ENCODE measurements at regions of chr1 and their contacts with region 1.

Region 1: GRCh38 chr1:110495926-110496600 is 22.9 kb downstream of the KCNA10 start:
- DNase-seq: peak; percentile 89
- H3K4me3 Mint-ChIP-seq: no peak overlapping the region
- H3K27ac Mint-ChIP-seq: no peak overlapping the region
- H3K4me1 Mint-ChIP-seq: peaks cover 7% of the 10 kb centered on the region
- H3K27me3 Mint-ChIP-seq: peaks cover 10% of the 10 kb centered on the region

Region 2: GRCh38 chr1:110196917-110197765 is 298.9 kb before region 1 on chr1:
- CTCF ChIA-PET with region 1: interaction called, 60 read pairs
- DNase-seq: peak; percentile 66
- H3K4me3 Mint-ChIP-seq: no peak overlapping the region
- H3K27ac Mint-ChIP-seq: no peak overlapping the region
- H3K4me1 Mint-ChIP-seq: no peaks in the 10 kb centered on the region
- H3K27me3 Mint-ChIP-seq: no peaks in the 10 kb centered on the region

Region 3: GRCh38 chr1:110209715-110210603 is 286.1 kb before region 1 on chr1 and contains the start of gene KCNC4:
- CTCF ChIA-PET with region 1: interaction called, 60 read pairs
- DNase-seq: peak; percentile 95
- H3K4me3 Mint-ChIP-seq: peak within 1 kb of the TSS; percentile 86
- H3K27ac Mint-ChIP-seq: peak within 1 kb of the TSS; percentile 95
- H3K4me1 Mint-ChIP-seq: peaks cover 42% of the 10 kb centered on the region
- H3K27me3 Mint-ChIP-seq: peaks cover 31% of the 10 kb centered on the region

Region 4: DNA sequence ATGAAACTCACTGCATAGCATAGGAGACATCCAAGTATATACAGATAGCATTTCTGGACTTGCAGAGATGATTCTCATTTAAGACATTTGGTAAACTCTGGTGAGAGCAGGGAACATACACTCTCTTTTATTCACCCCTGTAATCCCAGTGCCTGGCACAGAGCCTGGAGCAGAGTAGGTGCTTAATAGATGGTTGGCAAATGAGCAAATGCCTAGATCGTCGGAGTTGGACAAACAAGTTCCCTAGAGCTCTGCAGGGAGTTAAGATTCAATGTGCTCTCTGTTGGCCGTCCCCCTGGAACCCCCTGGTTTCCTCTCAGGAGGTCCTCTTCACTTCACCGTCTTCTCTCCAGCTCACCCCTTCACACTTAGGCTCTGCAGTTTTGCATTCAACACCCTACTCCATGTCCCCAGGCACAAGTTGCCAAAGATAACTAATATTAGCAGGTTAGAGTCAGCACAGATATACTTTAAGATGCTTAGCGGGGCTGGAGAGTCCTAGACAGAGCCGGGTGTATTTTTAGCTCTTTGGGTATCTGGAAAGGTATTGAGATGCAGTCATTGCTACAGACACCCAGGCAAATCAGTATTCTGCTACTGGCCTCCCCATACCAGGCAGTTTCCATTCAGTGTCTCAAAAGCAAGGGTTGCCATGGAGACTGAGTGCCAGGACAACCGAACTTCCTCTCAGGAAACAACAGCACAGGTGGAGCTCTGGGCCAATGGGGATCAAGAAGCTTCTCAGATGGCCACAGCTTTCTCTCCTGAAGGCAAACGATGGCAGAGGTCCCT is 240.9 kb before region 1 on chr1:
- CTCF ChIA-PET with region 1: no interaction called
- DNase-seq: no peak
- H3K4me3 Mint-ChIP-seq: no peak overlapping the region
- H3K27ac Mint-ChIP-seq: no peak overlapping the region
- H3K4me1 Mint-ChIP-seq: no peaks in the 10 kb centered on the region
- H3K27me3 Mint-ChIP-seq: no peaks in the 10 kb centered on the region

Region 5: DNA sequence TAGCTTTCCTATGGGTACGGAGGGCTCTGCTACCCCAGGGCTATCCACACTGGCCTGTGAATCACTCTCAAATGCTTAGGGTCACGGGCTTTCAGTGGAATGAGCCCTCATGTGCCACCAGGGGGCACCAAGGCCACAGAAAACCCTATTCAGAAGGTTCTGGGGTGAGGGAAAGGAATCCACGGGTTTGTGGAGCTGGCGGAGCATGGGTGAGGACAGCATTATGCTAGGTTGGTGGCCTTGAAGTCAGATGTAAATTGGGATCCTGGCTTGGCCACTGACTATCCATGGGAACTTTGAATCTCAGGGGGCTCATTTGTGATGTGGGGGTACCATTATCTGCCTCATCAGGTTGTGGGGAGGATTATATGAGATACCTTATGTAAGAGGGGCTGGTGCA is 83.5 kb before region 1 on chr1:
- CTCF ChIA-PET with region 1: interaction called, 69 read pairs
- DNase-seq: peak; percentile 75
- H3K4me3 Mint-ChIP-seq: no peak overlapping the region
- H3K27ac Mint-ChIP-seq: no peak overlapping the region
- H3K4me1 Mint-ChIP-seq: peaks cover 17% of the 10 kb centered on the region
- H3K27me3 Mint-ChIP-seq: no peaks in the 10 kb centered on the region

Region 6: GRCh38 chr1:110477041-110477440 is 19.0 kb before region 1 on chr1:
- CTCF ChIA-PET with region 1: interaction called, 57 read pairs
- DNase-seq: no peak
- H3K4me3 Mint-ChIP-seq: no peak overlapping the region
- H3K27ac Mint-ChIP-seq: no peak overlapping the region
- H3K4me1 Mint-ChIP-seq: no peaks in the 10 kb centered on the region
- H3K27me3 Mint-ChIP-seq: peaks cover 12% of the 10 kb centered on the region

Region 7: GRCh38 chr1:110508038-110508940 is 12.2 kb after region 1 on chr1:
- CTCF ChIA-PET with region 1: interaction called, 22 read pairs
- DNase-seq: no peak
- H3K4me3 Mint-ChIP-seq: no peak overlapping the region
- H3K27ac Mint-ChIP-seq: no peak overlapping the region
- H3K4me1 Mint-ChIP-seq: no peaks in the 10 kb centered on the region
- H3K27me3 Mint-ChIP-seq: peaks cover 34% of the 10 kb centered on the region

Region 8: DNA sequence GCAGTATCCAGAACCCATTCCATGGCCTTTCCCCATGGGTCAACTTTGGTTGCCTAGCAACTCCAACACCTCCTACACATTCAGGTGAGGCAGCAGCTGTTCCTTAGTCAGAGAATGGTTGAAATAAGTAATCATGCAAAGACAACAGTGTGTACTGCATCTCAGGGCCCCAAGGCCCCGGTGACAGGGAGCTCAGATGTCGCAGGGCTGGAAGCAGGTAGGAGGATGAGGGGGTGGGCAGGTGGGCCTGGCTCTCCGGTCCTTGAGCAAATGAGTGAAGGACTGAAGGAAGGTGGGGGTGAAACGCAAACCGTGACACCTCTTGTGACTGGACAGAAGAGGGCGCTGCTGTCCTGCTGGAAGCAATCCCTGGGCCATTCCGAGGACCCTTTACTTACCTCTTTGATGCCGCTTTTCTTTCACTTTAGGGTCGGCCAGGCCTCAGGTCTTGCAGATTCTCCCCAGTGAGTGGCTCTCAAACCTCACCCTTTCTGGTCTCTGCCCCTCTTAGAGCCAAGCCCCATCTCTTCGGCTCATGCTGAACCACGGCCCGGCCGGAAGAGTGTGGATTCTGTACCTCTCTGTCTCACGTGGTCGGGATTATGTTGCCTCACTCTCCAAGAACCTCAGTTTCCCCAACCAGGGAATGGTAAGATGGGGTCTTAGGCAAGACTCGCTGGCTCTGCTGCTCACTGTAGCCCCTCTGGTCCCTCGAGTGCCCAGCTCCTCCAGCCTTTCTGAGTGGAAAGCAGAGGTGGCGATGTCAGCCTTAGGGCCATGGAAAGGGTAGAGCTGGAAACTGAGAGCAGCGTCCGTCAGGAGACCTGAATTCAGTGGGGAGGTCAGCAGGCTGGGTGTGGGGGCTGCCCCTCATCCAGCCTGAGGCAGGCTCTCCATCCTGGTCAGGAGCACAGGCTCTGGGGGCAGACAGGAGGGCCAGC is 28.5 kb after region 1 on chr1:
- CTCF ChIA-PET with region 1: interaction called, 16 read pairs
- DNase-seq: peak; percentile 69
- H3K4me3 Mint-ChIP-seq: no peak overlapping the region
- H3K27ac Mint-ChIP-seq: no peak overlapping the region
- H3K4me1 Mint-ChIP-seq: no peaks in the 10 kb centered on the region
- H3K27me3 Mint-ChIP-seq: peaks cover 79% of the 10 kb centered on the region

Region 9: GRCh38 chr1:110587906-110588305 is 91.8 kb after region 1 on chr1:
- CTCF ChIA-PET with region 1: no interaction called
- DNase-seq: no peak
- H3K4me3 Mint-ChIP-seq: no peak overlapping the region
- H3K27ac Mint-ChIP-seq: no peak overlapping the region
- H3K4me1 Mint-ChIP-seq: peaks cover 5% of the 10 kb centered on the region
- H3K27me3 Mint-ChIP-seq: peaks cover 49% of the 10 kb centered on the region